B cell (primary cell): ENCODE measurements at regions of chr21 and their contacts with region 1.

Region 1: DNA sequence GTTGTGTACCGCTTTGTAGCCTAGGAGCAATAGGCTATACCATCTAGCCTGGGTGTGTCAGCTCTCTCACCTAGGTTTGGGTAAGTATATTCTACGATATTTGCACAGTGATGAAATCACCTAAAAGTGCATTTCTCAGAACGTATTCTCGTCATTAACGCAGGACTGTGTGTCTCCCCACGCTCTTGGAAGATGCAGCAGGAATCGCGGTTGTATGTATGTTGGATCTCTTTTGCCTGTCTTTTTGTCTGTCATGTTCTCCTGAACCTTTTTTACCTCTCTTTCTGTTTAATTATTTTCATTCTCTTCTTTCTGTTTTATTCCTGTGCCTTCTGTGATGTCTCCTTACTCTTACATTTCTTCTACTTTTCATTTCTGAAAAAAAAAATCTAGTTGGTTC is 140.5 kb upstream of the COL6A1 start:
- DNase-seq: no peak
- ATAC-seq: no peak
- H3K4me3 ChIP-seq: no peak overlapping the region
- H3K4me3 Mint-ChIP-seq: no peak overlapping the region
- H3K27ac ChIP-seq: no peak overlapping the region
- H3K27ac Mint-ChIP-seq: no peak overlapping the region
- H3K4me1 ChIP-seq: no peaks in the 10 kb centered on the region
- H3K4me1 Mint-ChIP-seq: no peaks in the 10 kb centered on the region
- H3K27me3 ChIP-seq: no peaks in the 10 kb centered on the region
- H3K27me3 Mint-ChIP-seq: peaks cover 5% of the 10 kb centered on the region
- CTCF ChIP-seq: no peak

Region 2: DNA sequence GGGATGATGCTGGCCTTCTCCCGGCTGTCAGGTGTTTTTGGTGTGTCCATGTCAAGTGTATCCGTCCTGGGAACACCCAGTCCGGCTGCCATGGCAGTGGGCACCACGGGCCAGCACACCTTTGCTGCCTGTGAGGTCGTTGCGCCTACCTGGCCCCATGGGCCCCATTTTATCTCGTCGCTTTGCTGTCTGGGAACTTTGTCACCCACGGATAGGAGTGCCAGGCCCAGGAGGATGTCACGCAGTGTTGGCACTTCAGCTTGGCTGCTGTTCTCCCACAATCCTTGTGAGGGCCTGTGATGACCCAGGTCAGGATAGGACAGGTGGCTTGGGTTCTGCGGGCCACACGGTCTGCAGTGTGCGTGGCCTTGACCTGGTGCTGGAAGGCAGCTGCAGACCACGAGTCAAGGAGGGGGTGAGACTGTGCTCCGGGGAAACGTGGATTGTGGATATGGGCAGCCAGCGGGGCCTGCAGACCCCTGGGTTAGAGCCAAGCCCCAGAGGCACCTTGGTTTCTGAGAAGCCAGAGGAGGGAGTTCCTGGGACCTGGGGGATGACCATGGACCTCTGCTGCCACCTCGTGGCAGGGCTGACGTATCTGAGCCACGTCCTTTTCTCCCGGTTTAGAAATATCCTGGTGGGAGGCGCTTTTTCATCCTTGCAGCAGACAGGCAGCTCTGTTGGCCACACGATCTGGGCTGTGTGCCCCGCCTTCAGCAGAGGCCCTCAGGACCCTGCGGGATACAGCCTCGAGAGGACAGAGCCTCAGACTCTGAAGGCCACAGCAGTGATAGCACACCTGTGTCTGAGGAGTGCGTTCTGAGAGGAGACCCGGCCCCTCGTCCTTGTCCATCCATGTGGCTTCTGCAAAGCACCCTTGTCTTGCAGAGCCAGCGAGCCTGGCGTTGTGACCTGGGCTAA is 20.6 kb before region 1 on chr21:
- CTCF ChIA-PET with region 1: interaction called, 10 read pairs
- POLR2A ChIA-PET with region 1: no interaction called
- intact Hi-C with region 1: no loop called
- DNase-seq: peak; percentile 80
- ATAC-seq: peak; percentile 68
- H3K4me3 ChIP-seq: no peak overlapping the region
- H3K4me3 Mint-ChIP-seq: no peak overlapping the region
- H3K27ac ChIP-seq: no peak overlapping the region
- H3K27ac Mint-ChIP-seq: peak overlapping the region; percentile 43
- H3K4me1 ChIP-seq: no peaks in the 10 kb centered on the region
- H3K4me1 Mint-ChIP-seq: peaks cover 2% of the 10 kb centered on the region
- H3K27me3 ChIP-seq: no peaks in the 10 kb centered on the region
- H3K27me3 Mint-ChIP-seq: peaks cover 38% of the 10 kb centered on the region
- CTCF ChIP-seq: peak; percentile 78

Region 3: DNA sequence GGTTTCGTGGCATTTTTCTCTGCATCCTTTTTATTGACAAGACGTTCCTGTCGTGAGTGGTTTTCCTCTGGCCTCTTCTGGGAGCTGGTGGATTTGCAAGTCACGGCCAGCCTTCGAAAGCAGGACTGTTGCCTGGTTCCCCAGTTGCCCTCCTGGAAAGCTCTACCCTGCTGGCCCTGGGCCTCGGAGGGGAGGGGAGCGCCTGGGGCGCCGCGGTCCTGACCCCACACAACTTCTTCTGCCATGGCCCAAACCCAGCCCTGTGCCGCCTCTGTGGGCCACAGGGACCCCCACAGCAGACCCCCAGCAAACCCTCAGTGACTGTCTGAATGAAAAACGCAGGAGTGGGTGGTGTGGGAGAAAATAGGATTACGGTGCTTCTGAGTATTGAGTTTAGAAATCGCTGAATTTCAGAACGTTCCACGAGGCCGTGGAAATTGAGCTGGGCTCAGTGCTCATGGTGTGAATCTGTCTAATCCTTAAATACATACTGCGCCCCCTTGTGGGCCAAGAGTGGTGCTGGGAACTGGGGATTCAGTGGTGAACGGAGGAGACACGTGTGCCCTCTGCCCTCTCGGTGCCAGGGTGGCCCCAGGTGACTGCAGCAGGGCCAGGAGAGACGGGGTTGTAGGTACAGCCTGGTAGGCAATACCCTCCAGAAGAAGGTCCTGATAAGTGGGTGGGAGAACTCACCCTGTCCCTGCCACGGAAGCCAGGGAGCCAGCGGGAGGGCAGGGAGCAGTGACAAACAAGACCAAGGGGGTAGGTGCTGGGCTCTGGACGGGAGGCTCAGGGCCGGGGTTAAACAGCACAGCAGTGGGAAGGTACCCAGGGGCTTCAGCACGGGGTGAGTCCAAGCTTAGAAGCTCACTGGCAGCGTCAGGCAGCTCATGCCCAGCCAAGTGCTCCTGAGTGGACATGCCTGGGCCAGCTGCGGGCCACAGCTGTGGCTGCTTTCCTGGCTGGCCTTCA is 39.4 kb after region 1 on chr21:
- CTCF ChIA-PET with region 1: no interaction called
- POLR2A ChIA-PET with region 1: no interaction called
- intact Hi-C with region 1: no loop called
- DNase-seq: peak; percentile 66
- ATAC-seq: peak; percentile 51
- H3K4me3 ChIP-seq: no peak overlapping the region
- H3K4me3 Mint-ChIP-seq: no peak overlapping the region
- H3K27ac ChIP-seq: no peak overlapping the region
- H3K27ac Mint-ChIP-seq: no peak overlapping the region
- H3K4me1 ChIP-seq: peaks cover 2% of the 10 kb centered on the region in 2 donors
- H3K4me1 Mint-ChIP-seq: peaks cover 4% of the 10 kb centered on the region
- H3K27me3 ChIP-seq: peaks cover 0 to 3% (median 0%) of the 10 kb centered on the region in 4 experiments
- H3K27me3 Mint-ChIP-seq: peaks cover 11% of the 10 kb centered on the region
- CTCF ChIP-seq: peak; percentile 61